Activated CD8-positive, alpha-beta T cell treated with anti-CD3 and anti-CD28 coated beads, Interleukin-2, amount 10 ng/mL, durations not matched to agents 7 days and 5 days (primary cell): ENCODE measurements at regions of chr6 and their contacts with region 1.

Region 1: GRCh38 chr6:90393232-90393884 is 96.7 kb upstream of the BACH2 start:
- DNase-seq: peak; percentile 89
- ATAC-seq: peak; percentile 74
- H3K4me3 Mint-ChIP-seq: no peak overlapping the region
- H3K27ac Mint-ChIP-seq: peak overlapping the region; percentile 64
- H3K4me1 Mint-ChIP-seq: peaks cover 52% of the 10 kb centered on the region
- H3K27me3 Mint-ChIP-seq: no peaks in the 10 kb centered on the region

Region 2: DNA sequence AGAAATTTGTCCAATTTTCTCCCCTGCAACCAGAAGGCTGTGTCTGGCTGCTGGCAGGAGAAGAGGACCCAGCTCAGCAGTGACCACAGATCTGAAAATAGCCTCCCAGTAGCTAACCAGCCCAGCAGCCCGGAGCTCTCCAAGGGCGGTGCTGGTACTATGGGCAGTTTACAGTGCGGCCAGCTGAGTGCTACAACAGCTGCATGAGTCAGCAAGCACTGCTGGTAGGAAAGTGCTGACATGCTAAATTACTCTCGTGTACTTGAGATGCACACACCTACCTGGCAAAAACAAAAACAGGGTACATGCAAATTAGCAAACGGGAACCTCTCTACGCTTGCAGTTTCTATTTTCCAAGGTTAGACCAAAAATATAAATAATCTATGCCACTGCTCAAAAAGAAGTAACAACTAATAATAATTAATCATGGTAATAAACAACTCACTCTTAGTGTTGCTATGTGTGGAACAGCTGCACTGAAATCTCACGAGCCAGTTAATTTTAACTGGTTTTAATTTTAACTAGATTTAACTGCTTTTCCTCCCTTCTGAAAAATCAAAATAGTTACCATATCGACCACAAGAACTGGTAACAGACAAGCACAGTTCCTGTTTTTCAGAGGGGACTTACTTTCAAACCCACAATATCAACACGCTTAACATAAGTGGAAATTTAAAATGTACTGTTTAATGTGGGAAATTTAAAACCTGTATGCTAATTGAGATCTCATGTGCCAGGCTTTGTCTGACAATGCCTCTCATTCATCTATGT is 107.6 kb before region 1 on chr6:
- CTCF ChIA-PET with region 1: interaction called, 46 read pairs
- POLR2A ChIA-PET with region 1: interaction called, 8 read pairs
- DNase-seq: peak; percentile 73
- ATAC-seq: peak; percentile 60
- H3K4me3 Mint-ChIP-seq: peak overlapping the region; percentile 75
- H3K27ac Mint-ChIP-seq: peak overlapping the region; percentile 78
- H3K4me1 Mint-ChIP-seq: peaks cover 89% of the 10 kb centered on the region
- H3K27me3 Mint-ChIP-seq: no peaks in the 10 kb centered on the region

Region 3: GRCh38 chr6:90350689-90351554 is 42.4 kb before region 1 on chr6:
- CTCF ChIA-PET with region 1: interaction called, 13 read pairs
- POLR2A ChIA-PET with region 1: no interaction called
- DNase-seq: peak; percentile 69
- ATAC-seq: peak; percentile 83
- H3K4me3 Mint-ChIP-seq: peak overlapping the region; percentile 27
- H3K27ac Mint-ChIP-seq: peak overlapping the region; percentile 73
- H3K4me1 Mint-ChIP-seq: peaks cover 25% of the 10 kb centered on the region
- H3K27me3 Mint-ChIP-seq: no peaks in the 10 kb centered on the region

Region 4: GRCh38 chr6:90403489-90404381 is 10.4 kb after region 1 on chr6:
- CTCF ChIA-PET with region 1: interaction called, 27 read pairs
- POLR2A ChIA-PET with region 1: interaction called, 4 read pairs
- DNase-seq: no peak
- ATAC-seq: no peak
- H3K4me3 Mint-ChIP-seq: no peak overlapping the region
- H3K27ac Mint-ChIP-seq: peak overlapping the region; percentile 85
- H3K4me1 Mint-ChIP-seq: peaks cover 75% of the 10 kb centered on the region
- H3K27me3 Mint-ChIP-seq: no peaks in the 10 kb centered on the region

Region 5: GRCh38 chr6:90444160-90444714 is 50.9 kb after region 1 on chr6:
- CTCF ChIA-PET with region 1: interaction called, 10 read pairs
- POLR2A ChIA-PET with region 1: interaction called, 3 read pairs
- DNase-seq: no peak
- ATAC-seq: no peak
- H3K4me3 Mint-ChIP-seq: no peak overlapping the region
- H3K27ac Mint-ChIP-seq: no peak overlapping the region
- H3K4me1 Mint-ChIP-seq: peaks cover 25% of the 10 kb centered on the region
- H3K27me3 Mint-ChIP-seq: no peaks in the 10 kb centered on the region

Region 6: GRCh38 chr6:90472744-90473143 is 79.4 kb after region 1 on chr6:
- CTCF ChIA-PET with region 1: interaction called, 170 read pairs
- POLR2A ChIA-PET with region 1: interaction called, 28 read pairs
- DNase-seq: peak; percentile 76
- ATAC-seq: peak; percentile 49
- H3K4me3 Mint-ChIP-seq: peak overlapping the region; percentile 24
- H3K27ac Mint-ChIP-seq: peak overlapping the region; percentile 62
- H3K4me1 Mint-ChIP-seq: peaks cover 91% of the 10 kb centered on the region
- H3K27me3 Mint-ChIP-seq: peaks cover 3% of the 10 kb centered on the region

Region 7: DNA sequence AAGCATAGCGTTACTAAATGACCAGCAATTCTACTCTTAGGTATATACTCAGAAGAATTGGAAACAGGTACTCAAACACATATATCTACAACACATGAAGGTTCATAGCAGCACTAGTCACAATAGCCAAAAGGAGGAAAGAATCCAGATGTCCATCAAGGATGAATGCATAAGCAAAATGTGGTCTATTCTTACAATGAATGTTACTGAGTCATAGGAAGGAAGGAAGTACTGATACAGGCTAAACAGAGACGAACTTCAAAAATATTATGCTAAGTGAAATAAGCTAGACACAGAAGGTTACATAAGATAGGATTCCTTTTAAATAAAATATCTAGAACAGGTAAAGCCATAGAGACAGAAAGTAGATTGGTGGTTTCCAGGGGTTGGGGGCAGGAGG is 100.0 kb after region 1 on chr6:
- CTCF ChIA-PET with region 1: no interaction called
- POLR2A ChIA-PET with region 1: no interaction called
- DNase-seq: no peak
- ATAC-seq: no peak
- H3K4me3 Mint-ChIP-seq: no peak overlapping the region
- H3K27ac Mint-ChIP-seq: no peak overlapping the region
- H3K4me1 Mint-ChIP-seq: peaks cover 6% of the 10 kb centered on the region
- H3K27me3 Mint-ChIP-seq: peaks cover 45% of the 10 kb centered on the region

Region 8: GRCh38 chr6:90896075-90896547 is 502.8 kb after region 1 on chr6:
- CTCF ChIA-PET with region 1: no interaction called
- POLR2A ChIA-PET with region 1: no interaction called
- DNase-seq: no peak
- ATAC-seq: no peak
- H3K4me3 Mint-ChIP-seq: no peak overlapping the region
- H3K27ac Mint-ChIP-seq: no peak overlapping the region
- H3K4me1 Mint-ChIP-seq: no peaks in the 10 kb centered on the region
- H3K27me3 Mint-ChIP-seq: peaks cover 2% of the 10 kb centered on the region